Mammary epithelial cell (primary cell): ENCODE measurements at regions of chr22 and their contacts with region 1.

Region 1: GRCh38 chr22:38793721-38794466 is at the start of gene DNAL4:
- DNase-seq: peak; percentile 98
- H3K4me3 ChIP-seq: peak within 1 kb of the TSS; percentile 71 to 76 (median 76)
- H3K27ac ChIP-seq: peak within 1 kb of the TSS; percentile 92
- H3K4me1 ChIP-seq: peaks cover 14% of the 10 kb centered on the region
- H3K27me3 ChIP-seq: no peaks in the 10 kb centered on the region
- CTCF ChIP-seq: no peak
- total RNA-seq, gene DNAL4: 12.6 to 13.5 TPM

Region 2: GRCh38 chr22:38862375-38863329 is 68.8 kb after region 1 on chr22:
- CTCF ChIA-PET with region 1: no interaction called
- dilution Hi-C with region 1: no loop called
- in situ Hi-C with region 1: no loop called
- intact Hi-C with region 1: loop called (anchors 2 kb)
- DNase-seq: no peak
- H3K4me3 ChIP-seq: no peak overlapping the region
- H3K27ac ChIP-seq: no peak overlapping the region
- H3K4me1 ChIP-seq: peaks cover 9% of the 10 kb centered on the region
- H3K27me3 ChIP-seq: no peaks in the 10 kb centered on the region
- CTCF ChIP-seq: no peak

Region 3: DNA sequence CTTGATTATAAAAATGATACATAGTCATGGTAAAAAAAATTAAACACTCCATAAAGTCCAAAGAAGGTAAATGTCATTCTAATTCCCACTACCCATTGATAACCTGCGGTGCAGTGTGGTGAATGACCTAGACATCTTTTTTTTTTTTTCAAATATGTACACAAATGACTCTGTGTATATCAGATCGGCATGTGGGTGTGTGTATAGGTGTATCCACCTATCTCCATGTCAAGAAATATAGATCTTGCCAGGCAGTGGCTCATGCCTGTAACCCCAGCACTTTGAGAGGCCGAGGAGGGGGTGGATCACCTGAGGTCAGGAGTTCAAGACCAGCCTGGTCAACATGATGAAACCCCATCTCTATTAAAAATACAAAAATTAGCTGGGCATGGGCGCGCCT is 96.5 kb after region 1 on chr22:
- CTCF ChIA-PET with region 1: no interaction called
- dilution Hi-C with region 1: no loop called
- in situ Hi-C with region 1: no loop called
- intact Hi-C with region 1: no loop called
- DNase-seq: no peak
- H3K4me3 ChIP-seq: no peak overlapping the region
- H3K27ac ChIP-seq: no peak overlapping the region
- H3K4me1 ChIP-seq: no peaks in the 10 kb centered on the region
- H3K27me3 ChIP-seq: peaks cover 2% of the 10 kb centered on the region
- CTCF ChIP-seq: no peak

Region 4: DNA sequence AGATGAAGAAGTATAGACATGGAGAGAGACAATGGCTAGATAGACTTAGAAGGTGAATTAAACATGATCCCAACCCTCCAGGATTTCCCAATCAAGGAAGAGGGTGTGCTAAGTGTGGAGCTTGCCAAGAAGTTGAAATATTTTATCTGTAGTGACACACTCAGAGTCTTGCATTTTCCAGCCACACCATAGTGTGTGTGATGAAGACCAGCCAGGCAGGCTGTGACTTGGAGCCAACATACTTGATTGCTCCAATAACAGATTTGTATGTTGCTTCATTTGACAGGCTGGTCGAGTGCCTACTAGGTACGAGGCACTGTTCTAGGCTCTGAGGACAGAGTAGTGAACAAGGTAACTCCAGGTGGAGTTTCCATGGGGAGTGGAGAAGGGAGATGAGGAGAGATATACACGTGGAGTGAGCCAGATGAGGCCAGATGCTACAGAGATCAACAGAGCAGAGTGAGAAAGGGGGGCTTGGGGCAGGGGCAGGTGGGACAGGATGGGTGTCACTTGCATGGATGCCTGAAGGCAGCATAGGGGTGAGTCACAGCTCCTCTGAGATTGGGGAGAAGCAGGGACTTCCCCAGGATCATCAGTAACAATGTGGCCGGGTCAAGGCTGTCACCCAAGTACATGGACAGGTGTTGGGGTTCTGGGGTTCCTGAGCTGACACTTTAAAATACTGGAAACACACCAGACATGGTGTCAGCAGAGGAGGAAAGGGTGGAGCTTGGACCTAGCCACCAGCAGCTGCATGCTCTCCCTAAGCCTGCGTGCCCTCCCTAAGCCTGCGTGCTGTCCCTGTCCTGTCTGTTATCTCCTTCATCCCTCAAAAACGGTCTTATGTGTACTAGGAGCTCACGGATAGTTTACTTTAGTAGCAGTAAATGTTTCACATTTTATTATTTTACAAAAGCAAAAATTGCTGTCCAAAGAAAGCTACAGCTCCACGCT is 427.3 kb after region 1 on chr22:
- CTCF ChIA-PET with region 1: no interaction called
- dilution Hi-C with region 1: no loop called
- in situ Hi-C with region 1: no loop called
- intact Hi-C with region 1: no loop called
- DNase-seq: peak; percentile 66
- H3K4me3 ChIP-seq: no peak overlapping the region
- H3K27ac ChIP-seq: no peak overlapping the region
- H3K4me1 ChIP-seq: peaks cover 10% of the 10 kb centered on the region
- H3K27me3 ChIP-seq: no peaks in the 10 kb centered on the region
- CTCF ChIP-seq: no peak